ENCODE measurements at regions of chr16 and their contacts with region 1.

Region 1: DNA sequence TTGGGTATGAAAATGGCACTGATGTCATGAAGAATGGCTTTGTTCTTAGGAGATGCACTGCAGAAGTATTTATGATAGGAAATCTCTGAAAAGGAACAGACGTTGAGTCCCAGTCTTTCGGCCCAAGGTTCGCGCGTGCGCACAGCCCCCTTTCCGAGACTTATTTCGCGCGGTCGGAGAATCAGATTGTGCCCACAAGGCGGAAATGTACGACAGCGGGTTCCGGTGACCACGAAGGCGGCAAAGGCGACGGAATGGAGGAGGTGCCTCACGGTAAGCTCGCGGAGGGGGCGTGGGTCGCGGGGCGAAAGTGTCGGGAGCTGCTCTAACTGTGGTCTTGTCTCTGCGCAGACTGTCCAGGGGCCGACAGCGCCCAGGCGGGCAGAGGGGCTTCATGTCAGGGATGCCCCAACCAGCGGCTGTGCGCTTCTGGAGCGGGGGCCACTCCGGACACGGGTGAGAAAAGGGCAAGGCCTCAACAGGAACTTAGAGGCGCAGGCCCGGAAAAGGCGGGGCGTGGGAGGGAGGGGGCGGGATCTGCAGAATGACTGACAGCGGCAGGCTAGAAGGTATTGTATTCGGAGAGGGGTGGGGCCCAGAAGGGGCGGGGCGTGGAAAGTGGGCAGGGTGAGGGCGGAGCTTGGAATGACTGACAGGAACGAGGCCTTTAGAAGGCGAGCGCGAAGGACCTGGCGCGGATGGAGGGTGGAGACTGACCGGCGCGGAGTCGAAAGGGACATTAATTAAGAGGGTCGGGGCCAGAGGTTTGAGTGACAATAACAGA is at the start of gene NUBP1:
- DNase-seq: peak; percentile 100
- H3K4me3 ChIP-seq: peak within 1 kb of the TSS; percentile 13 to 61 (median 52)
- H3K27ac ChIP-seq: peak within 1 kb of the TSS; percentile 88 to 98 (median 92)
- H3K4me1 ChIP-seq: peaks cover 5 to 24% (median 16%) of the 10 kb centered on the region in 4 donors
- H3K27me3 ChIP-seq: no peaks in the 10 kb centered on the region
- CTCF ChIP-seq: peak in 2 of 5 experiments; percentile 40 to 48
- EP300 ChIP-seq: no peak
- POLR2A ChIP-seq: peak; percentile 83
- total RNA-seq, gene NUBP1: 11.6 to 23.8 (median 22.5) TPM

Region 2: DNA sequence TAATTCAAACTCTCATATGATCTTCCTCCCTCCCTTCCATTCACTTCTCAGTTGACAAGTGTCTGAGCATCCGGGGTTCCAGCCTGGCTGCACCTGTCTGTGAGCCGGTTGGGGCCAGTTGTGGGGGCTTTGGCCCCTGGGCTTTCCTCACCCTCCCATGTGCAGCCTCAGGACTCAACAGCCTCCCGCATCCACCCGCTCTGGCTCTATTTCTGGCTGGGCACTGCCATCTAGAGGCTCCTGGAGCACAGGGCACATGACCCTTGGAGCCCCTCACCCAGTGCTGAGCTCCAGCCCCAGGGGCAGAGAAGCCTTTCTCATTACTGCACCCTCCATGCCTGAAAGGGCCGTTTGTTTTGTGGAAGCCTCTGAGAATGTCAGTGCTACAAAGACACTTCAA is 1609.1 kb before region 1 on chr16:
- in situ Hi-C with region 1: loop called in 1 of 4 experiments (anchors 25 kb)
- intact Hi-C with region 1: no loop called
- DNase-seq: peak; percentile 63
- H3K4me3 ChIP-seq: no peak overlapping the region
- H3K27ac ChIP-seq: no peak overlapping the region
- H3K4me1 ChIP-seq: peaks cover 0 to 9% (median 6%) of the 10 kb centered on the region in 4 donors
- H3K27me3 ChIP-seq: no peaks in the 10 kb centered on the region
- CTCF ChIP-seq: peak; percentile 39 to 60 (median 51)
- EP300 ChIP-seq: no peak
- POLR2A ChIP-seq: no peak

Region 3: GRCh38 chr16:10835281-10835931 is 91.6 kb after region 1 on chr16:
- in situ Hi-C with region 1: no loop called
- intact Hi-C with region 1: no loop called
- DNase-seq: no peak
- H3K4me3 ChIP-seq: no peak overlapping the region
- H3K27ac ChIP-seq: no peak overlapping the region
- H3K4me1 ChIP-seq: no peaks in the 10 kb centered on the region
- H3K27me3 ChIP-seq: peaks cover 3% of the 10 kb centered on the region
- CTCF ChIP-seq: no peak
- EP300 ChIP-seq: no peak
- POLR2A ChIP-seq: no peak

Measured in transverse colon (tissue), 4 donors.